Esophagus squamous epithelium (tissue), 5 donors: ENCODE measurements at regions of chr19 and their contacts with region 1.

Region 1: DNA sequence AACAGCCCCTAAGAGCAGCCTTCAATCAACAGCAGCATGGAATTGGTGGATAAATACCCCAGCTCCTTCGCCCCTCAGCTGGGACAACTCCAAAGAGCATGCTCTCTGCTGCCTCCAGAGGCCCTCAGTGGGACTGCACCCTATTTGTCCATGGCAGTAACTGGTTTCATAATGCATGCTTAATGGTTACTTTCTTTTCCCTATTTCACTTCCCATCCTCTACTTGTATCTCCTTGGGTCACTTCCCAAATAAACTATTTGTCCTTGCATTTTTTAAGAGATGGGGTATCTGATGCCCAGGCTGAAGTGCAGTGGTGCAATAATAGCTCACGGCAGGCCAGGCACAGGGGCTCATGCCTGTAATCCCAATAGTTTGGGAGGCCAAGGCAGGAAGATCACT is 13.5 kb upstream of the TPM4 start:
- DNase-seq: no peak
- H3K4me3 ChIP-seq: no peak overlapping the region
- H3K27ac ChIP-seq: peak overlapping the region in 1 of 4 donors; percentile 28
- H3K4me1 ChIP-seq: peaks cover 4 to 38% (median 26%) of the 10 kb centered on the region in 3 donors
- H3K27me3 ChIP-seq: no peaks in the 10 kb centered on the region
- CTCF ChIP-seq: peak; percentile 80 to 88 (median 81)
- POLR2A ChIP-seq: no peak

Region 2: GRCh38 chr19:15737723-15738122 is 325.1 kb before region 1 on chr19 and contains the start of gene OR10H3:
- intact Hi-C with region 1: no loop called
- DNase-seq: no peak
- H3K4me3 ChIP-seq: no peak within 1 kb of the TSS
- H3K27ac ChIP-seq: no peak within 1 kb of the TSS
- H3K4me1 ChIP-seq: no peaks in the 10 kb centered on the region
- H3K27me3 ChIP-seq: peaks cover 0 to 9% (median 0%) of the 10 kb centered on the region in 4 donors
- CTCF ChIP-seq: no peak
- POLR2A ChIP-seq: no peak
- total RNA-seq, gene OR10H3: not detected

Region 3: DNA sequence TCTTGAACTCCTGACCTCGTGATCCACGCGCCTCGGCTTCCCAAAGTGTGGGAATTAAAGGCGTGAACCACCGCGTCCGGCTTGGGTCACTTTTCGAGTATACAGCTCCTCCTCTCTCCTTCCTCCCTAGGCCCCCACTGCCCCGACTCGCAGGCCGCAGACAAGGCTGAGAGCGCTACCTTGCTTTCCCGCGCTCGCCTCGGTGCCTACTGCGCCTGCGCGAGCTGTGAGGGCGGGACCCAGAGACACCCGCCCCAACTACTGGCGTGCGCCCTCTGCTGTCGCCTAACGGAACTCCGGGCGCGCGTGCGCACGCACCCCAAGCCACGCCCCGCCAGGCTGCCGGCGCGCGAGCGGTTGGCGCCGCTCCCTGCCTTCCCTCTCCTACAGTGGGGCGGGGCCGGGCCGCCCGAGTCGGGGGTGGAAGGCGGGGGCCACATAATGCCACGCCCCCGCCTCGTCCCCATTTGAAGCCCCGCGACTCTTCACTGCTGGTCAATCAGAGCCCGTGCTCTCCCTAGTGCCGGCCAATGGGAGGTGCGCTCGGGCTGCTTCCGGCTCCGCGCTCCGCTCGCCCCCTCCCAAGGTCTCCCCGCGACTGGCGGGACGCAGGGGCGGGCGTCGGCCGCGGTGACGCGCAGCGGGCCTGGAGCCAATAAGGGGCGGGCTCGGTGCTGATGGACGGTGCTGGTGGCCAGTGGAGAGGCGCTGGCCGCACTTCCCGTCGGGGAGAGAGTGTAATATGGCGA is 48.5 kb after region 1 on chr19 and contains the start of gene RAB8A:
- intact Hi-C with region 1: loop called (anchors 10 kb)
- DNase-seq: peak; percentile 97
- H3K4me3 ChIP-seq: peak within 1 kb of the TSS; percentile 69 to 83 (median 76)
- H3K27ac ChIP-seq: peak within 1 kb of the TSS; percentile 91 to 95 (median 94)
- H3K4me1 ChIP-seq: peaks cover 16 to 60% (median 33%) of the 10 kb centered on the region in 3 donors
- H3K27me3 ChIP-seq: no peaks in the 10 kb centered on the region
- CTCF ChIP-seq: peak; percentile 89 to 100 (median 100)
- POLR2A ChIP-seq: peak in 2 of 4 donors; percentile 28 to 58
- total RNA-seq, gene RAB8A: 39.5 to 70.9 (median 46.4) TPM

Region 4: GRCh38 chr19:16233836-16234551 is 171.2 kb after region 1 on chr19:
- intact Hi-C with region 1: no loop called
- DNase-seq: no peak
- H3K4me3 ChIP-seq: no peak overlapping the region
- H3K27ac ChIP-seq: no peak overlapping the region
- H3K4me1 ChIP-seq: no peaks in the 10 kb centered on the region
- H3K27me3 ChIP-seq: no peaks in the 10 kb centered on the region
- CTCF ChIP-seq: no peak
- POLR2A ChIP-seq: no peak